Tibial artery (tissue), 4 donors: ENCODE measurements at regions of chr21 and their contacts with region 1.

Region 1: DNA sequence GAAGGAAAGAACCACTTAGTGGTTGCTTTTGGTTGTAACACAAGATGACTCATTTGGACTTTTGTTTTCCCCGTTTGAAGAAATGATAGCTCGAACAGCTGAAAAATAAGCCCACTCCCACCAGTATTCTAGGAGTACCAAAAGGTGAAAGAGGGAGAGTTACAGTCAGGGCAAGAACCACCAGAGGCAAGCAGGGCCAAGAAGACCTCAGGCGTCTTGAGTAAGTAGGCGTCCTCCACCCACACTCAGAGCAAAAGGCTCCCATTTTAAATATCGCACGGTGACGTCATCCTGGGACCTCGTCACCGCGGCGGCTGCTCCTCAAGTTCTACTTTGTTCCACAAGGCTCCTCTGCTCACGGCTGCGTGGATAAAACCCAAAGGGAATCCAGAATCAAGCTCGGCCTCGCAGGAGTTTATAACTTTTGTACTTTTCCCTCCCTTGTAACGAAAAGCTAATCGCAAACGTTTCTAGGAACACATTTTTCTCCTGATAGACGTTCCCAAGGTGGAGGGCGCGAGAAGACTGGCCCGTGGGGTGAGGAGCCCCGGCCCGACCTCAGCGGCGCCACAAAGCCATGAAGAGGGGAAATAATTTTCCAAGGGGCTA is 1.2 kb downstream of the BTG3 start:
- DNase-seq: peak; percentile 82 to 88
- H3K4me3 ChIP-seq: peak overlapping the region; percentile 74 to 96
- H3K27ac ChIP-seq: peak overlapping the region; percentile 96
- H3K4me1 ChIP-seq: peaks cover 0 to 17% (median 11%) of the 10 kb centered on the region in 4 donors
- H3K27me3 ChIP-seq: no peaks in the 10 kb centered on the region
- CTCF ChIP-seq: peak in 1 of 2 experiments; percentile 9

Region 2: DNA sequence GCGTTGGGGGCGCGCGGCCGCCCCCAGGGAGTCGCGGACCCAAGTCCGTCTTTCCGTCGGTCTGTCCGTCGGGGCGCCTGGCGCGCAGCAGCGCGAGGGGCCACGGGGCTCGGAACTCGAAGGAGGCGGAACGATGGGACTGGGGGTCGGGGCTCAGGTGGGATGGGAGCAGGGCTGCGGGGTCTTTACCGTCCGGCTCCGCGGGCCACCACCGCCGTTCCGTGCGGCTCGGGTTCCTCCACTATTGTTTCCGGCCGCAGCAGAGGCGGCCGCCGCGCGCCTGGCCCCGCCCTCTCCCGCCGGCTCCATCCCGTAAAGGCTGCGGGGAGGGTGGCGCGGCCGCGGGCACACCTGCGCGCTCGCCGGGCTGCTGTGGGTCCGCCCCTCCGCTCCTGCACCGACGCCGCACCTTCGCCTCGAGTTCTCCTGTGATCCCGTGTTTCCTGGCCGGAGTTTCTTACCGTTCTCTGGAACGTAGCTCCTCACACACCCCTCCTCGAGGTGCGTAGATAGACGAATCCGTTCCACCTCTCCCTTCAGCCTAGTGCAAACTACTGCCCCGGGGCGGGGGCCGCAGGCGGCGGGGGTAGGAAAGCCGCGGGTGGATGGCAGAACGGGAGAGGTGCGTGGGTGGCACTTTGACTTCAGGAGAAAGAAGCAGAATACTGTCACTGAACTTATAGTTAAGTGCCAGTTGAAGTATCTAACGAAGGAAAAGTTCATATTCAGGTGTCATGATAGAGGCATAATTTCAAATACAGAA is 207.8 kb after region 1 on chr21 and contains the start of gene C21orf91:
- intact Hi-C with region 1: loop called (anchors 2 kb)
- DNase-seq: peak; percentile 89 to 92
- H3K4me3 ChIP-seq: peak within 1 kb of the TSS; percentile 98 to 99
- H3K27ac ChIP-seq: peak within 1 kb of the TSS; percentile 92 to 93
- H3K4me1 ChIP-seq: peaks cover 0 to 23% (median 8%) of the 10 kb centered on the region in 4 donors
- H3K27me3 ChIP-seq: no peaks in the 10 kb centered on the region
- CTCF ChIP-seq: no peak